Caco-2 (cell line): ENCODE measurements at regions of chr11 and their contacts with region 1.

Region 1: DNA sequence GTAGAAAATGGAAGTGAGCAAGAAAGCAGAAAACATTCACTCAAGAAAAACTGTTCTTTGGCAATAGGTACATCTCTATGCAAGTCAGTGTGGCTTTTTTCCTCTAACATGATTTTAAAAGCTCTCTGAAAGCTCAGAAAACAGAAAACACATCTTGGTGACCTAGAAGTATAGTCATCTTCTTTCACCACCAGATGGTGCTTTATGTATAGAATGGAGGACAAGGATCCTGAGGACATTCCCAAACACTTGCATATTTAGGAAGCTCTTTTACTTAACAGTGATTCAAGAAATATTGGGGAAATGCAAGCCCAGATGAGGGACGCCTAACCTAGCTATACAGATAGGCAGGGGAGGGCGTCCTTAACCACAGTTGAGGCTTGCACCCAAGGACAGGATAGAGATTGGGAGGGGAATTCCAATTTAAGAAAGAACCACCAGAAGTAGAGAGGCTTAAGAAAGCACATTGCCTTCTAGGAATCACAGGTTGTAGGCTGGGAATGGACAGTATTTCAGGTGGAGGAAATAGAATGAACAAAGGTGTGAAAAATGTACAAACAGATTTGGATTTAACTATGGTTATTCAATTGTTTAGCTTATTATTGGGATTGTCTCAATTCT is 13.8 kb upstream of the CCDC81 start:
- DNase-seq: peak in 1 of 2 experiments; percentile 47
- H3K4me3 ChIP-seq: no peak overlapping the region
- H3K4me3 Mint-ChIP-seq: no peak overlapping the region
- H3K27ac Mint-ChIP-seq: no peak overlapping the region
- H3K4me1 ChIP-seq: no peaks in the 10 kb centered on the region
- H3K4me1 Mint-ChIP-seq: no peaks in the 10 kb centered on the region
- H3K27me3 ChIP-seq: no peaks in the 10 kb centered on the region
- H3K27me3 Mint-ChIP-seq: no peaks in the 10 kb centered on the region
- CTCF ChIP-seq: peak; percentile 71 to 78

Region 2: DNA sequence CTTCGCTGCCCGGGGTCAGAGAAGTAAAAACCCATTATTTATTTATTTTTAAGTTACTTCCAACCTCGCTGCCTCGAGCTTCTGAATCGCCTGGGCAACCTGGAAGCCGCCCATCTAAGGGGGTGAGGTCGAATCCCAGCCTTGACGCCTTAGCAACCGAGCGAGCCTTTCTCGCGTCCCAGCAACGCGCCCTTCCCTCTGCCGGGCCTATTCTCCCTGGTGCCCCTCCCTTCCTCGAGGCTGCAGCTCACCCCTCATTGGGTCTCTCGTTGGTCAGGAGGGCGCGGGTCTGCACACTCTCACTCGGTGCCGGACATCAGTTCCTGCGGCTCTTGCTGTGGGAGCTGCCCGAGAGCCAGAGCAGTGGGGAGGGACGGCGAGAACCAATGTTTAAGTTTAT is 13.7 kb after region 1 on chr11 and contains the start of gene CCDC81:
- CTCF ChIA-PET with region 1: interaction called, 5 read pairs
- POLR2A ChIA-PET with region 1: interaction called, 11 read pairs
- intact Hi-C with region 1: no loop called
- DNase-seq: no peak
- H3K4me3 ChIP-seq: no peak within 1 kb of the TSS
- H3K4me3 Mint-ChIP-seq: no peak within 1 kb of the TSS
- H3K27ac Mint-ChIP-seq: no peak within 1 kb of the TSS
- H3K4me1 ChIP-seq: peaks cover 18% of the 10 kb centered on the region
- H3K4me1 Mint-ChIP-seq: peaks cover 22% of the 10 kb centered on the region
- H3K27me3 ChIP-seq: no peaks in the 10 kb centered on the region
- H3K27me3 Mint-ChIP-seq: no peaks in the 10 kb centered on the region
- CTCF ChIP-seq: no peak
- total RNA-seq, gene CCDC81: 1.1 and 1.3 TPM in 2 replicates

Region 3: DNA sequence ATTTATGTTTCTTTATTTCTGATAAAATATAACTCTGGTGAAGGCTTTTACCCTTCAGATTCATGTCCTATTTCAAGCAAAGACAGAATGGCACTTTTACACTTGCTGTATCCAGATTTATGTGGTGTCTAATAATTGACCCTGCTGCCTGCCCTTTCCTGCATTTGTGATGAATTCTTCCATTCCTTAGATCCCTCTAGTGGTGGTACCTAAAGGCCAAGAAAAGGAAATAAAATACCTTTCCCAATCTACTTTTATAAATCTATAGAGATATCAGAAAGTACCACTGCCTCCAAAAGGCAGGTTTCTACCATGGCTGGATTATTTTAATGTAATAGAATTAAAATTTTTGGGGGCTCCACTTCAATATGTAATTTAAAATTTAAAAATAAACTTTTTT is 48.0 kb after region 1 on chr11:
- CTCF ChIA-PET with region 1: interaction called, 4 read pairs
- POLR2A ChIA-PET with region 1: no interaction called
- intact Hi-C with region 1: loop called (anchors 2 kb)
- DNase-seq: no peak
- H3K4me3 ChIP-seq: no peak overlapping the region
- H3K4me3 Mint-ChIP-seq: no peak overlapping the region
- H3K27ac Mint-ChIP-seq: no peak overlapping the region
- H3K4me1 ChIP-seq: no peaks in the 10 kb centered on the region
- H3K4me1 Mint-ChIP-seq: no peaks in the 10 kb centered on the region
- H3K27me3 ChIP-seq: no peaks in the 10 kb centered on the region
- H3K27me3 Mint-ChIP-seq: no peaks in the 10 kb centered on the region
- CTCF ChIP-seq: peak; percentile 45 to 71

Region 4: DNA sequence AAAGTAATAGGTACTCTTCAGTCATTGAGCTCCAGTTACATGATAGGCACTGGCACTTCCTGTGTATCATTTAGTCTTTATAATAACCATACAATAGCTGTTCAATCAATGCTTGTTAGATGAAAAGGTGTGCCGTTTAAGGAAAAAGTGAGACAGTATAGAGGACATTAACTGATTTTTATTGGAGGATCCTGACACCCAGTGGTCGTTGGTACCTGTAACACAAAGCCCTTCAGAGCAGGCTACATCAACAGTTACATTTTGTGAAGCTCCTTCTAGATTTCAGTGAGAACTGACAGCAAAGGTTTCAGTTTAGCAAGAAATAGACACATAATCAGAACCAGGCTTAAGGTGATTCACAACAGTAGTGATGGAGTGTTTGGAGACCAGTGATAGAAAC is 58.0 kb after region 1 on chr11:
- CTCF ChIA-PET with region 1: interaction called, 65 read pairs
- POLR2A ChIA-PET with region 1: interaction called, 3 read pairs
- intact Hi-C with region 1: loop called (anchors 1 kb)
- DNase-seq: peak in 1 of 2 experiments; percentile 46
- H3K4me3 ChIP-seq: no peak overlapping the region
- H3K4me3 Mint-ChIP-seq: no peak overlapping the region
- H3K27ac Mint-ChIP-seq: no peak overlapping the region
- H3K4me1 ChIP-seq: peaks cover 19% of the 10 kb centered on the region
- H3K4me1 Mint-ChIP-seq: peaks cover 33% of the 10 kb centered on the region
- H3K27me3 ChIP-seq: no peaks in the 10 kb centered on the region
- H3K27me3 Mint-ChIP-seq: no peaks in the 10 kb centered on the region
- CTCF ChIP-seq: peak; percentile 31 to 61

Region 5: GRCh38 chr11:86818466-86819192 is 457.7 kb after region 1 on chr11:
- CTCF ChIA-PET with region 1: no interaction called
- POLR2A ChIA-PET with region 1: no interaction called
- intact Hi-C with region 1: loop called (anchors 1 kb)
- DNase-seq: peak in 1 of 2 experiments; percentile 74
- H3K4me3 ChIP-seq: no peak overlapping the region
- H3K4me3 Mint-ChIP-seq: no peak overlapping the region
- H3K27ac Mint-ChIP-seq: peak overlapping the region; percentile 23
- H3K4me1 ChIP-seq: peaks cover 52% of the 10 kb centered on the region
- H3K4me1 Mint-ChIP-seq: peaks cover 41% of the 10 kb centered on the region
- H3K27me3 ChIP-seq: no peaks in the 10 kb centered on the region
- H3K27me3 Mint-ChIP-seq: no peaks in the 10 kb centered on the region
- CTCF ChIP-seq: peak; percentile 83 to 95